ENCODE measurements at regions of chr1 and their contacts with region 1.

Region 1: DNA sequence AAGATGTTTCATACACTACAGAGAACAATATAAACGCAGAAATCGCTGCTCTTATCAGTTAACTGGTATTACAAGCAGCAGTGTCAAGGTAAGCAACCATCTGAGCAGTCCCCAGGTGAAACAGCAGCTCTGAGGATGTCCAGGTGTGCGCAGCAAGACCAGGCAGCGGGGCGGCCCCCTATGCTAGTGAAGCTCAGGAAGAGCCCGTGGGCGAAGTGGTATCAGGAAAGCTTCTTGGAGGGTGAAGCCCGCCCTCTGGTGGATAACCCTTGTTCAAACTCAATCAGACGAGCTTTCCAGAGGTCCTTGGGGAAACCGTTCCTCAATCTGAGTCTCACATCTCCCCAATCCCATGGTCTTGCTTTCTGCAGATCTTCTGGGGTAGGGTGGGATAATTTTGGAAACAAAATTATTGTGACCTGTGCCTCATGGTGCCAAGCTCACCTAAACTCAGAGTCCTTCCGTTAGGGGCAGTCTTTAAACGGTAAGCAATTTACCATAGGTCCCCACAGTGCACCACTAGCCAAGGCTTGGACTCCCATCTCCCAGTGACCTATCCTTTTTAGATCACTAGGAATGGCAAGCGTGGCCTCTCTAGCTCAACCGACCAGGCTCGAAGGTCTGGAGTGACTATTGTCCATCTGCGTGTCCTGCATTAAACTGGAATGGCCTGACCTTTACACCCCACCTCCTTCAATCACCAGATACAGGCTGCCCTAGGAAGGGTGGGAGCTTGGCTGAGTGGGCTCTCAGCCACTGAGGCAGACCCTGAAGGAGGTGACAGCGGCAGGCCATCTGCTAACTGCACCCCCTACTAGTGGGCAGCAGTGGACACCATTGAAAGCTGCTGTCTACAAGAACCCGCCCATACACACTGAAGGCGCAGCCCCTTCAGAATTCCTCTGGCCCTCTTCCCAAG is 13.6 kb upstream of the FAM110D start:
- H3K4me3 ChIP-seq: no peak overlapping the region
- H3K27ac ChIP-seq: no peak overlapping the region
- H3K4me1 ChIP-seq: no peaks in the 10 kb centered on the region
- CTCF ChIP-seq: peak; percentile 79

Region 2: DNA sequence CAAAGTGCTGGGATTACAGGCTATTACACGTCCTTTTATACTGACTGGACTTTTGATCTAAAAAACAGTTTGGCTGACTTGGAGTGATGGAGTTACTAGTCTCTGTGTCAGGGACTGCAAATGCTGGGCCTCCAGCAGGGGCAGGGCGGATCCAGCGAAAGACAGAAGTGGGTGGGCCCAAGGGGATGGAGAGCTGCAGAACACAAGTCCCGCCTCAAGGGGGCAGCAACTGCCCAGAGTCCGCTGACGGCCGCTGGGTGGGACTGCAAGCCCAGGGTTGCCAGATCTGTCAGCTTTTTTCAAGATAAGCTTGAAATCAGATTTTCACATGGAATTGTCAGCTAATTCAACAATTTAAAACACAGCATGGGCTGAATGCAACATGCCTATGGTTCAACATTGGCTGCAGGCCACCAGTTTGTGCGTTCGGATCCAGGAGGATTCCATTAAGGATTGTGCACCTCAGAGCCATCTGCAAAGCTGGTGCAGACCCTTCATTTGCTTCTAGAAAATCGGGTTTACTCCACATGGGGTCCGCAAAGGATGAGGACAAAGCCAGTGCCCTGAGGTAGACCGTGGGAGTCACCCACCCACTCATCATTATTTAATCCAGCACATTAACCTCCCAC is 249.8 kb before region 1 on chr1:
- CTCF ChIA-PET with region 1: interaction called, 10 read pairs
- POLR2A ChIA-PET with region 1: no interaction called
- H3K4me3 ChIP-seq: no peak overlapping the region
- H3K27ac ChIP-seq: no peak overlapping the region
- H3K4me1 ChIP-seq: no peaks in the 10 kb centered on the region
- CTCF ChIP-seq: peak; percentile 97

Region 3: GRCh38 chr1:26083246-26083645 is 62.1 kb before region 1 on chr1:
- CTCF ChIA-PET with region 1: interaction called, 11 read pairs
- POLR2A ChIA-PET with region 1: no interaction called
- H3K4me3 ChIP-seq: no peak overlapping the region
- H3K27ac ChIP-seq: no peak overlapping the region
- H3K4me1 ChIP-seq: no peaks in the 10 kb centered on the region
- CTCF ChIP-seq: no peak

Region 4: GRCh38 chr1:26111530-26112406 is 33.5 kb before region 1 on chr1 and contains the start of gene PDIK1L:
- CTCF ChIA-PET with region 1: interaction called, 129 read pairs
- POLR2A ChIA-PET with region 1: interaction called, 7 read pairs
- H3K4me3 ChIP-seq: peak within 1 kb of the TSS; percentile 92
- H3K27ac ChIP-seq: peak within 1 kb of the TSS; percentile 87
- H3K4me1 ChIP-seq: no peaks in the 10 kb centered on the region
- CTCF ChIP-seq: peak; percentile 28; the same call in 1 of the 2 replicates

Region 5: DNA sequence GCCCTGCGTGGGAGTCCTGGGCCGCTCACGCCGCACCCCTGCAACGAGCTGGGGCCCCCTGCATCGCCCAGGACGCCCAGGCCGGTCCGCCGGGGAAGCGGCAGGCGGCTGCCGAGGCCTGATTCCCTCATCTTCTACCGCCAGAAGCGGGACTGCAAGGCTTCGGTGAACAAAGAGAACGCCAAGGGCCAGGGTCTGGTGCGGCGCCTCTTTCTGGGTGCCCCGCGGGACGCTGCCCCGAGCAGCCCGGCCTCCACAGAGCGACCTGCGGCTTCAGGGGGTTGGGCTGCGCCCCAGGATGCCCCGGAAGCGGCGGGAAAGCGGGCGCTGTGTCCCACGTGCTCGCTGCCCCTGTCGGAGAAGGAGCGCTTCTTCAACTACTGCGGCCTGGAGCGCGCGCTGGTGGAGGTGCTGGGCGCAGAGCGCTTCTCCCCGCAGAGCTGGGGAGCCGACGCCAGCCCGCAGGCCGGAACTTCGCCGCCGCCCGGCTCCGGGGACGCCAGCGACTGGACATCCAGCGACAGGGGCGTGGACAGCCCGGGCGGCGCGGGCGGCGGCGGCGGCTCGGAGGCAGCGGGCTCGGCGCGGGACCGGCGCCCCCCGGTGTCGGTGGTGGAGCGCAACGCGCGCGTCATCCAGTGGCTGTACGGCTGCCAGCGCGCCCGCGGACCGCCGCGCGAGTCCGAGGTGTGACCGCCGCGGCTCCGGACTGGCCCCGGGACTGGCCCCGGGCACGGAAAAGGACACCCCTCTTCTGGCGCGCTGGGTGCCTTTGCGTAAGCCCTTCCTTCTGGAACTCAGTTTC is 16.3 kb after region 1 on chr1:
- CTCF ChIA-PET with region 1: interaction called, 18 read pairs
- POLR2A ChIA-PET with region 1: no interaction called
- H3K4me3 ChIP-seq: peak overlapping the region; percentile 12; the same call in 1 of the 2 replicates
- H3K27ac ChIP-seq: peak overlapping the region; percentile 45; the same call in 1 of the 2 replicates
- H3K4me1 ChIP-seq: no peaks in the 10 kb centered on the region; the same call in 1 of the 2 replicates
- CTCF ChIP-seq: no peak

Region 6: DNA sequence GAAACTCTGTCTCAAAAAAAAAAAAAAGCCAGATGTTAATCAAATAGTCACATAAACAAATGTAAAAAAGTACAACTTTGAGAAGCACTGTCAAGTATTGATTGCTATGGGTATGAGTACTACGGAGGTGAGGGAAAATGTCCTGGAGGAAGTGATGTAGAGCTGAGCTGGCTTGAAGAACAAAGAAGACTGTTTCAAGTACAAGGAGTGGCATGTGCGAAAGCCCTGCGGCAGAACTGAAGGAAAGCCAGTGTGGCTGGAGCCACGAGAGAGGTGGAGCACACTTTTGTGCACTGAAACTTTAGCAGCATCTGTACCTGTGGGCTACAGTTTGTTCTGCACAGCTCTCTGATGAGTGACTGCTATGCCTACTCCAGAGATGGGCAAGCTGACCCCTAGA is 378.9 kb after region 1 on chr1:
- CTCF ChIA-PET with region 1: no interaction called
- POLR2A ChIA-PET with region 1: no interaction called
- H3K4me3 ChIP-seq: no peak overlapping the region
- H3K27ac ChIP-seq: no peak overlapping the region
- H3K4me1 ChIP-seq: no peaks in the 10 kb centered on the region
- CTCF ChIP-seq: no peak